ENCODE measurements at regions of chr15 and their contacts with region 1.

Region 1: GRCh38 chr15:84748274-84749110 is at the start of gene ZNF592:
- DNase-seq: peak; percentile 64 to 95 (median 72)

Region 2: DNA sequence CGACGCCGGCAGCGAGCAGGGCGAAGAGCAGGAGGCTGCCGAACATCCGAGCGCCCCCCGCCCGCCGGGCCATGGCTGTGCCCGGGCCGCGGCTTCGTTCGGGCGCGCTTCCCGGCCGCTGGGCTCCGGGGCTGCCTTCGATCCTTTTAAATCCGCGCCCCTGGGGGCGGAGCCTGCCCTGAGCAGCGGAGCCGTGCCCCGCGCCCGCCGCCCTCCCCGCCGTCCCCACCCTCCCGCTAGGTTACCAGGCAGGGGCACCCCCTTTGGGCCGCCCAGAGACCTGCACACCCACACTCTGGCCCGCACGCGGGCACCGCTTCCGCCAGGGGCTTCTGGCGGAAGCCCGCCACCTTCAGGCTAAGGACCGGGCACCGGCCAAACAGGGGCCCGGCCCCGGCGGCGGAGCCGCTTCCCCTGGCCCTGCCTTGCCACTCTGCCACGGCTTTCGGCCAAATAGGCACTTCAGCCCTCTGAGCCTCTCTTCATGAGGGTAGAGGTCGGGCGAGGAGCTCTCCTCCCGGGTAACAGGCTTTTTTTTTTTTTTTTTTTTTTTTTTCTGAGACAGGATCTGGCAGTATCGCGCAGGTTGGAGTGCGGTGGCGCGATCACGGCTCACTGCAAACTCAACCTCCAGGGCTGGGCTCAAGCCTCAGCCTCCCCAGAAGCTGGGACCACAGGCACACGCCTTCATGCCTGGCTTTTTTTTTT is 90.3 kb before region 1 on chr15 and contains the start of gene NMB:
- intact Hi-C with region 1: loop called (anchors 2 kb)
- DNase-seq: peak; percentile 39 to 95 (median 66)

Region 3: GRCh38 chr15:84716036-84716799 is 32.3 kb before region 1 on chr15 and contains the start of gene SEC11A:
- intact Hi-C with region 1: loop called (anchors 1 kb)
- DNase-seq: peak; percentile 94 to 99 (median 96)

Region 4: DNA sequence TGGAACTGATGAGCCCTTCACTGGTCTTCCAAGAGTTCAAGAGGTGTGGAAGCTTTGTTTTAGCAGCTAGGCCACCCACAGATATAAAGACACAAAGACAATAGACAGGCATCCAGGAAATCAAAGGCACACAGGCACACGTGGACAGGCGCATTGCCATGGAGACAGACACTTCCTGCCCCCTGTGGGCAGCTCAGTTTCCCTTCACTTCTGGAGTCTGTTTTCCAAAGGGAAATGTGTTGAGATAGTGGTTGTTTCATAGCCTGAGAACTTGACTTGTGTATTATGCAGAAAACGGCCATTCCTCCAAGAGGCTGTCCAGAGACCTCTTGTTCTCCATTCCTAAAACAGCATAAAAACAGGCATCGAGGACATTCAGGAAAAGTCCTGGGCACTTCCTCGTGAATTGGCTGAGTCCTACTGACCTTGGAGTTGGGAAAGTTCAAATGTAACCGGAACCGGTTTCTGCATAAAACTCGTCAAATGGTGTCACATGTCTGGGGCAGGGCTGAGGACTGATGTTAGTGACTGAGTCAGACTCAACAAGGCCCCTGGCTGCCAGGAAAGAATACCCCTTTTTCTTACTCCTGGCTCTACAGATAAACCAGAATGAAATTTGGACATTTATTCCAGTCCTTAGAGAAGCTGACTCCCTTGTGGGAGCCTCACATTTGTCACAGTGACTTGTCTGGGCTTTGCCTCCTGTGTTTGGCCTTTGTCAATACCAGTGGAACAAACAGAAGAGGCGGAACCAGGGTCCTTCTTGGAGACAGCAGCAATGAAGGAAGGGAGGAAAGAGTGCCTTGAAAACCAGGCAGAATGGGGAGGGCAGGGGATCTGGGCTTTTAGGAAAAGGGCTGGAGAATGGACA is 70.0 kb after region 1 on chr15:
- intact Hi-C with region 1: loop called (anchors 10 kb)
- DNase-seq: peak in 1 of 10 donors; percentile 67

Region 5: DNA sequence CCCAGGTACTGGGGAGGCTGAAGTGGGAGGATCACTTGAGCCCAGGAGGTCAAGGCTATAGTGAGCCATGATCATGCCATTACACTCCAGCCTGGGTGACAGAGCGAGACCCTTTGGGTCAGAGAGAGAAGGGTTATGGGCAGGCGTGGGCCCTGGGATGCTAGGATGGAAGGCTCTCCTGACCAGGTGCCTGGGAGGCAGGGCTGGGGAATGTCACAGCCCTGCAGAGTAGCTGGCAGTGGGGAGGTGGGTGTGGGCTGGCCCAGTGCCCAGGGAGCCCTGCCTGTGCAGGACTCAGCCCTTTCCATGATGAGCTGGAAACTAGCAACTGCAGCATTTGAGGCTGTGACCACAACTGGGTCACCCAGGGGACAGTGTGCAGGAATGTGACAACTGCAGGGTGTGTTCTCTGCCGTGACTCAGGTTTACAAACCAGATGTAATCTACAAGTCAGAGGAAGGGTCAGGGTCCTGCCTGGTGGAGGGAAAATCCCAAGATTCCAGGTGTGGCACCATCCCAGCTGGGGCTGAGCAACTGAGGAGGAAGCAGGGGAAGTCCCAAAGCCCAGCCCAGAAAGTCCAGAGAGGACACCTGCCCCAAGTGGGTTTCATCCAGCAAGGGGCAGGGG is 181.4 kb after region 1 on chr15:
- intact Hi-C with region 1: loop called (anchors 10 kb)
- DNase-seq: peak in 1 of 10 donors; percentile 70

Region 6: GRCh38 chr15:84973492-84974460 is 225.3 kb after region 1 on chr15:
- intact Hi-C with region 1: no loop called
- DNase-seq: no peak

Region 7: GRCh38 chr15:85407804-85408746 is 659.6 kb after region 1 on chr15:
- intact Hi-C with region 1: no loop called
- DNase-seq: no peak